Heart right ventricle (tissue), 16 donors: ENCODE measurements at regions of chr2 and their contacts with region 1.

Region 1: DNA sequence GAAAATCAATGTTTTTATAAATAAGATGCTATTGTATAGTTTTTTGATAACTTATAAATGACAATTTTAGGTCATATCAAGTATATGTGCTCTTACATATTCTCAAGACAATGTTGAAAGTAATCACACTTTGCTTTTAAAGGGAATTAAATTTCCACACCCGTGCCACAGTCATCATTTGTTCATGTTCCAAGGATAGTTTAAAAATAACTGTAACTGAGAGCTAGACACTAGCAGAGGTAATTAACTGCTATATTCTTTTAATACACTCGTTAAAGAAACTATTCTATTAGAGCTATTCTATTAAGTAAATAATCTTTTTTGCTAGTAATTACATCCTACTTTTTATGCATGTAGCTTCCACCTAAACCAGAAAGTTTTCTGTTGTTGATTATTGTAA is 18.0 kb downstream of the GEN1 start:
- DNase-seq: no peak
- ATAC-seq: peak in 2 of 8 donors; percentile 70 to 71
- H3K4me3 ChIP-seq: no peak overlapping the region
- H3K27ac ChIP-seq: no peak overlapping the region
- H3K4me1 ChIP-seq: peaks cover 0 to 7% (median 0%) of the 10 kb centered on the region in 9 donors
- H3K27me3 ChIP-seq: no peaks in the 10 kb centered on the region
- CTCF ChIP-seq: no peak

Region 2: GRCh38 chr2:17719562-17720371 is 52.2 kb before region 1 on chr2:
- intact Hi-C with region 1: no loop called
- DNase-seq: no peak
- ATAC-seq: no peak
- H3K4me3 ChIP-seq: no peak overlapping the region
- H3K27ac ChIP-seq: no peak overlapping the region
- H3K4me1 ChIP-seq: no peaks in the 10 kb centered on the region
- H3K27me3 ChIP-seq: no peaks in the 10 kb centered on the region
- CTCF ChIP-seq: peak; percentile 71 to 85 (median 83)

Region 3: GRCh38 chr2:17791121-17791816 is 19.3 kb after region 1 on chr2:
- intact Hi-C with region 1: no loop called
- DNase-seq: no peak
- ATAC-seq: no peak
- H3K4me3 ChIP-seq: no peak overlapping the region
- H3K27ac ChIP-seq: no peak overlapping the region
- H3K4me1 ChIP-seq: peaks cover 0 to 6% (median 0%) of the 10 kb centered on the region in 9 donors
- H3K27me3 ChIP-seq: no peaks in the 10 kb centered on the region
- CTCF ChIP-seq: no peak

Region 4: DNA sequence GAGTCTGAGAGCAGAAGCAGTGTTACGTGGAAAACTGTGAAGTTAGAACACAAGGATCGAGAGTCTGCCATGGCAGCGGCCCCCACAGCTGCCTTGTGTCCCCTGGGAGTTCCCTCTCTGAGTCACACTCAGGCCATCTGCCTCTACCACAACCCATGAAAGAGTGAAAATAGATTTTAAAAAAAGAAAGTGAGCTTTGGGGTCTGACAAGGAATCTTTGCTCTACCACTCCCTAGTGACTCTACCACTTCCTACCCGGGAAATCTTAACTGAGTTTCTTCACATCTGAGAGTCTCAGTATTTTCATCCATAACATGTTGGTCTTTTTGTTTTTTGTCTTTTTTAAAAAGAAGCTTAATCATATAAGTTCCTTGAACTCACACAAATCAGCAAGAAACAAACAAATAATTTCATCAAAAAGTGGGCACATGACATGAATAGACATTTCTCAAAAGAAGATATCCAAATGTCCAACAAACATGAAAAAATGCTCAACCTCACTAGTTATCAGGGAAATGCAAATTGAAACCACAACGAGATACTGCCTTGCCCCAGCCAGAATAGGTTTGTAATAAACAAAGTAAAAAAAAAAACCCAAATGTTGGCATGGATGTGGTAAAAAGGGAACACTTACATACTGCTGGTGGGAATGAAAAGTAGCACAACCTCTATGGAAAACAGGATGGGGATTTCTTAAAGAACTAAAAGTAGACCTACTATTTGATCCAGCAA is 42.0 kb after region 1 on chr2:
- intact Hi-C with region 1: loop called in 1 of 10 experiments (anchors 5 kb)
- DNase-seq: peak; percentile 48 to 69
- ATAC-seq: peak; percentile 82 to 94 (median 90)
- H3K4me3 ChIP-seq: peak overlapping the region in 4 of 10 donors; percentile 5 to 9 (median 6)
- H3K27ac ChIP-seq: peak overlapping the region; percentile 45 to 82 (median 64)
- H3K4me1 ChIP-seq: peaks cover 0 to 17% (median 9%) of the 10 kb centered on the region in 9 donors
- H3K27me3 ChIP-seq: no peaks in the 10 kb centered on the region
- CTCF ChIP-seq: no peak